ENCODE measurements at regions of chr6 and their contacts with region 1.

Region 1: DNA sequence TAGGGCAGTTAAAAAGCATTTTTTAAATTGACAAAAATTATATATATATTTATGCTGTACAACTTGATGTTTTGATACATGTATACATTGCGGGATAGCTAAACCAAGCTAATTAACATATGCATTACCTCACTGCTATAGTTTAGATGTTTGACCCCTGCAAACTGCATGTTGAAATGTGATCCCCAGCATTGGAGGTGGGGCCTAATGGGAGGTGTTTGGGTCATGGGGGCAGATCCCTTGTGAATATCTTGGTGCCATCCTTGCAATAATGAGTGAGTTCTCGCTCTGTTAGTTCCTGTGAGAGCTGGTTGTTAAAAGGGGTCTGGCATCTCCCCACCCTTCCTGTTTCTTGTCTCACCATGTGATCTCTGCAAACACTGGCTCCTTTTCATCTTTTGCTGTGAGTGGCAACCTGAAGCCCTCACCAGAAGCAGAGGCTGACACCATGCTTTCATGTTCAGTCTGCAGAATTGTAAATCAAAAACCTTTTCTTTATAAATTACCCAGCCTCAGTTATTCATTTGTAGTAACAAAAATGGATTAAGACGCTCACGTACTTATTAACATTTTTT is 111.8 kb downstream of the MCHR2 start:
- DNase-seq: no peak
- ATAC-seq: no peak
- H3K4me3 ChIP-seq: no peak overlapping the region
- H3K27ac ChIP-seq: no peak overlapping the region
- H3K4me1 ChIP-seq: no peaks in the 10 kb centered on the region
- H3K27me3 ChIP-seq: peaks cover 0 to 6% (median 0%) of the 10 kb centered on the region in 7 donors
- CTCF ChIP-seq: no peak

Region 2: GRCh38 chr6:99852031-99852430 is 30.2 kb before region 1 on chr6:
- intact Hi-C with region 1: loop called in 1 of 10 experiments (anchors 1 kb)
- DNase-seq: no peak
- ATAC-seq: no peak
- H3K4me3 ChIP-seq: no peak overlapping the region
- H3K27ac ChIP-seq: no peak overlapping the region
- H3K4me1 ChIP-seq: no peaks in the 10 kb centered on the region
- H3K27me3 ChIP-seq: peaks cover 0 to 8% (median 0%) of the 10 kb centered on the region in 7 donors
- CTCF ChIP-seq: no peak

Region 3: DNA sequence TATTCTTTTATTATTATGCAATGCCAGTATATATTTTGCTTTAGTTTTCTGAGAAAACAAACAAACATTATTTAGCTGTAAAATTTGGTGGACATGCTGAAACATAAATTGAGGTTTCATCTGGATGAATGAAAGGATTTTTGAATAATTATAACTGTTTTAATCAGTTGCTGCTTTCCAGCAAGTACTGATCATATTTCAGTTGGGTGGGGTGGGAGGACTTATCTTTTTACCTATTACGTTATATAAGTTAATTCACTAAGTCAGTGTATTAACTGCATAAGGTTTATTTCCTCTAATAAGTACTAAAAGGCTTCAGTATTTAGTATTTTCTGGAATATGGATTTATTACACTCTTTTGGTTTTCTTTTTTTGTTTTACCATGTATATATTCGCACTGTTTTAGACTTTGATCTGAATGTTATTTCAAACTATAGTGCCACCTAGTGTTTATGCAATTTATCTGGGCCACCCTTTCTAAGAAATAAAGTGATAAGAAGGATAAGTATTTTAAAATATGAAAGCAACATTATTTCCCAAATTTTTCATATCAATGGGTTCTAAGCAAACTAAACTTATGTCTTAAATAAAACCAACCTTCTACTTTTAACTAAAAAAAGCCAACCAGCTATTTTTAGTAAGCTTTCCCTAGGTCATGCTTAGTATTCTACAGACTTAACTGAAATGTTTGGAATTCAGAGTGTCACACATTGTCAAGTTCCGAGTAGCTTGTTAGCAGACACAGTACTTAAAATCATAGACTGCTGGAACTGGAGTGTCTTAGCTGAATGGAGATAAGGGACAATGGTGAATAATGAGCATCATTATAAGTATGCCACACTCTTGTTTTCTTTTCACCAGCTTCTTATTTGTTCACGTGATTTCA is 217.2 kb after region 1 on chr6:
- intact Hi-C with region 1: loop called in 2 of 10 experiments (anchors 10 kb)
- DNase-seq: no peak
- ATAC-seq: no peak
- H3K4me3 ChIP-seq: no peak overlapping the region
- H3K27ac ChIP-seq: no peak overlapping the region
- H3K4me1 ChIP-seq: no peaks in the 10 kb centered on the region
- H3K27me3 ChIP-seq: peaks cover 0 to 14% (median 6%) of the 10 kb centered on the region in 7 donors
- CTCF ChIP-seq: peak in 8 of 9 donors; percentile 16 to 61 (median 50)